ENCODE measurements at regions of chr1 and their contacts with region 1.

Region 1: GRCh38 chr1:153626922-153627796 is at the start of gene S100A13:
- DNase-seq: peak; percentile 94

Region 2: GRCh38 chr1:153428790-153429189 is 198.4 kb before region 1 on chr1:
- CTCF ChIA-PET with region 1: no interaction called
- POLR2A ChIA-PET with region 1: no interaction called
- DNase-seq: no peak

Region 3: DNA sequence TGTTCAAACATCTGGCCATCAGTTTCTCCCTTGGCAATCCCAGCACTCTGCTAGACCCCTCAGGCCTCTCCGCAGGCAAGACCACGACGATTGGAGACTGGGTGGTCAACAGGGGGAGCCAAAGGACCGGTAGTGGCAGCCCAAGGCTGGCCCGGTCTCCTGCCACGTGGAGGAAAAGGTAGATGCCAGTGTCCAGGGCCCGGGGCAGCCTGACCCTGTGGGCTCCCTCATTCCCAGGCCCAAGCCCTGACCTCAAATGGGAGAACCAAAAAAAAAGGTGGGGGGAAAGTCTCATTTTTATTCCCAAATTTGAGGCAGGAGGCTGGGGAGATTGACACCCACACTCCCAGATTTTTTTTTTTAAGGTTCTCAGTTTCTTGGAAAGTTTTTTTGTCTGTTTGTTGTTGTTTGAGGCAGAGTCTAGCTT is 116.2 kb before region 1 on chr1:
- CTCF ChIA-PET with region 1: interaction called, 11 read pairs
- POLR2A ChIA-PET with region 1: interaction called, 5 read pairs
- DNase-seq: peak; percentile 94

Region 4: GRCh38 chr1:153532769-153533599 is 94.2 kb before region 1 on chr1:
- CTCF ChIA-PET with region 1: interaction called, 15 read pairs
- POLR2A ChIA-PET with region 1: interaction called, 23 read pairs
- DNase-seq: peak; percentile 72

Region 5: GRCh38 chr1:153550827-153551500 is 76.2 kb before region 1 on chr1:
- CTCF ChIA-PET with region 1: no interaction called
- POLR2A ChIA-PET with region 1: no interaction called
- DNase-seq: no peak

Region 6: GRCh38 chr1:153577624-153578051 is 49.5 kb before region 1 on chr1:
- CTCF ChIA-PET with region 1: interaction called, 15 read pairs
- POLR2A ChIA-PET with region 1: interaction called, 15 read pairs
- DNase-seq: no peak

Region 7: DNA sequence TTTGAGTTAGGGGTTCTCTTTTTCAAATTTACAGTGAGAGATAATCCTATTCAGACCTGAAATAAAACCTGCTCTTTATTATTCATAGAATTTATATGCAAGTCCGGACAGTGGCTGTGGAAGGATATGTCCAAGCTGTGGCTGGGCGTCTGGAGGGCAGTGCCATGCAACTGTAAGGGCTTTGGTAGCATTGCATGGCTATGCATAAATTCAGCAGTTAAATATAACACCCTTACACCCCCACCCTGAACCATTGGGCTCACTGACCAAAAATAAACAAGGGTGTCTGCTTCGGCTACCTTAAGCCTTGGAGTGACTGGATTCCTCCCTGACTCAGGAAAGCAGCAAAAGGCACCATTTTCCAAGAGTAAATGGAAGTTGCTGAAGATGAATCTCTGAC is 12.1 kb after region 1 on chr1:
- CTCF ChIA-PET with region 1: interaction called, 8 read pairs
- POLR2A ChIA-PET with region 1: interaction called, 13 read pairs
- DNase-seq: no peak

Measured in HEK293T (cell line).